ENCODE measurements at regions of chr1 and their contacts with region 1.

Region 1: DNA sequence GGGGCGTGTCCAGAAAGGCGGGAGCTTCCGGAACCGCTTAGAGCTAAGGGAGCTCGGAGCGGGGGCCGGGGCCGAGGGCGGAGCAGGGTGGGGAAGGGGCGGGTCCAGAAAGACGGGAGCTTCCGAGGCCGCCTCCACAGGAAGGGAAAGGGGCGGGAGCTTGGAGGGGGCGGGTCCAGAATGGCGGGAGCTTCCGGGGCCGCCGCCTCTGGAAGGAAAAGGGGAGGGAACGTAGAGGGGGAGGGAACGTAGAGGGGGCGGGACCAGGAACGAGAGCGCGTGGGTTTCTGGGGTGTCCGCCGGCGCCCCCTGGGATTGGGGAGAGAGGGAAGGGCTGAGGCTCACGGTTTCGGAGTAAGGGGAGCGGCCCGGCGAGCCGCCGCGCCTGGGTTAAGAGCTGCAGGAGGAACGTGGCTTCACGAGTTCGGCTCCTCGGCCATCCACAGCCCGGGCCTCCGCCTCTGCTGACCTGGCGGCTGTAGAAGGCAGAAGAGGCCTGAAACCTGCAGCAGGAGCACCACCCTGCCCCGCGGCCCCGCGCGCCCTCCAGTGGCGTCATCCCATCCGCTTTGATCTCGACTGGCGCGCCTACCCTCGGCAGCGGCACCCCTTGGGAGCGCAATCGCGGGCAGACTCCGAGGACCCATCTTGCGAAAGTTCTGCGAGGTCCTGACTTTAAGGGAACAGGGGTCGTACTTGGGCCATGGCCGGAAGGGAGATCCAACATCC is 22.9 kb upstream of the HPDL start:
- DNase-seq: peak; percentile 84
- ATAC-seq: peak; percentile 86
- H3K4me3 ChIP-seq: peak overlapping the region; percentile 90
- H3K27ac ChIP-seq: peak overlapping the region; percentile 95
- H3K4me1 ChIP-seq: peaks cover 18% of the 10 kb centered on the region
- H3K27me3 ChIP-seq: no peaks in the 10 kb centered on the region
- CTCF ChIP-seq: peak; percentile 65 to 75 (median 68)
- EP300 ChIP-seq: no peak
- POLR2A ChIP-seq: peak; percentile 95
- RAD21 ChIP-seq: peak; percentile 51

Region 2: DNA sequence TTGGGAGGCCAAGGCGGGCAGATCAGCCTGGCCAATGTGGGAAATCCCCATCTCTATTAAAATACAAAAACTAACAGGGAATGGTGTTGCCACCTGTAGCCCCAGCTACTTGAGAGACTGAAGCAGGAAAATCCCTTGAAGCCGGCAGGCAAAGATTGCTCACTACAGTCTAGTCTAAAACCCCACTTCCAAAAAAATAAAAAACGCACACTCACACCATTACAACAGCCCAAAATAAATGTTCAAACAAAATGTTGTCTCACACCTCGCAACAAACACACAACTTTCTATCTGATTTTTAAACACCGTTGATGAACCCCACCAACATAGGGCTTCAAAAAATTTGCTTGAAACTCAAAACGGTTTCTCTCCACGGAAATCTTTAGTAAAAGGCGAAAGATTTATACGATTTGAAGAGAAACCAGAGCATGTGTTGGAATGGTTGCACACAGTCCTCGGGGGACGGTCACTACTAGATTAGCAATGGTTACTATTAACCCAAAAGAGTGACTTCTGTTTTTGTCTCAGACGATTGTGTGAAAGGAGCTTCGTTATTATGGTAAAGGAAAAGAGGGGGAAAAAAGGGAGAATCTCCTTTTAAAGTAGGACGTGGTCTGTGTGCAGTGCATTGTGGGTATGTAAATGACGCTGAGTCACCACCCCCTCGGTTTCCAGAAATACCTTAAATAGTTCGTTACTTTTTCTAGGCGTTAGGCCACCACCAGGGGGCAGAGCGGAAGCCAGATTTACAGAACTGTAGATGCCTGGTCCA is 572.8 kb before region 1 on chr1 and contains the start of gene RNU5D-1:
- CTCF ChIA-PET with region 1: interaction called, 10 read pairs
- POLR2A ChIA-PET with region 1: interaction called, 4 read pairs
- RAD21 ChIA-PET with region 1: interaction called, 9 read pairs
- SMC1A ChIA-PET with region 1: interaction called, 6 read pairs
- in situ Hi-C with region 1: no loop called
- intact Hi-C with region 1: loop called (anchors 5 kb)
- DNase-seq: peak; percentile 98
- ATAC-seq: peak; percentile 87
- H3K4me3 ChIP-seq: peak within 1 kb of the TSS; percentile 47; the same call in 1 of the 2 replicates
- H3K27ac ChIP-seq: peak within 1 kb of the TSS; percentile 100
- H3K4me1 ChIP-seq: peaks cover 14% of the 10 kb centered on the region
- H3K27me3 ChIP-seq: no peaks in the 10 kb centered on the region
- CTCF ChIP-seq: peak; percentile 72 to 88 (median 83)
- EP300 ChIP-seq: peak in 1 of 2 experiments; percentile 44; a peak in 1 of 4 replicates
- POLR2A ChIP-seq: peak; percentile 96
- RAD21 ChIP-seq: peak; percentile 58
- polyA plus RNA-seq, gene RNU5D-1: not detected

Region 3: GRCh38 chr1:44826375-44827196 is 477.2 kb before region 1 on chr1:
- CTCF ChIA-PET with region 1: interaction called, 3 read pairs
- POLR2A ChIA-PET with region 1: interaction called, 5 read pairs
- RAD21 ChIA-PET with region 1: interaction called, 4 read pairs
- SMC1A ChIA-PET with region 1: interaction called, 3 read pairs
- in situ Hi-C with region 1: loop called (anchors 5 kb)
- intact Hi-C with region 1: no loop called
- DNase-seq: no peak
- ATAC-seq: peak; percentile 19; the same call in 2 of the 3 replicates
- H3K4me3 ChIP-seq: no peak overlapping the region
- H3K27ac ChIP-seq: no peak overlapping the region
- H3K4me1 ChIP-seq: no peaks in the 10 kb centered on the region
- H3K27me3 ChIP-seq: no peaks in the 10 kb centered on the region; a peak in 1 of 4 replicates
- CTCF ChIP-seq: no peak
- EP300 ChIP-seq: no peak
- POLR2A ChIP-seq: no peak
- RAD21 ChIP-seq: no peak

Region 4: DNA sequence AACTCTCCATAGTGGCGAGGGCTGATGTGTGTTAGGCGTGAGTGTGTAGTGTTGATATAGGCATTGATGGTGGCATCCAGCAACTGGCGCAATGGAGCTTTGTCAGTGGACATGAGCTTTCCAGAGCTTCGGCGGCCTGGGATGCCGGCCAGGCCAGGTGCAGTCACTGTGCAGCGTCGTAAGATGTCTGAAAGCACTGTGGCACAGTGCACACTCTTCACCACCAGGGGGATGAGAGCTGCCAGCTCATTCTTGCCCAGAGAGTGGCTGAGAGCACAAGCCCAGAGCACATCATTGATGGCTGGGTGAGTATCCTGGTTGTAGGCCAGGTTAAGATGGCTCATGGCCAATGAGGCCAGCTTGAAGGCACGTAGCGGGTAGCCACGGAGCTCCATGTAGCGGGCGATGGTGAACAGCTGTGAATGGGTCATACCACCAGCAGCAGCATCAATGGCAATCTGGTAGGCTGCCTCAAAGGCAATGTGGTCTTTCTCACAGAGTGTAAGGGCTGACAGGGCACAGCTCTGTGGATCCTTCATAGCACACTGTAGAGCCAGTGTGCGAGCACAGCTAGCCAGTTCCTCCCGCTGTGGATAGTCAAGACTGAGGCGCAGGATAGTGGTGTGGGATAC is 285.0 kb before region 1 on chr1:
- CTCF ChIA-PET with region 1: interaction called, 252 read pairs
- POLR2A ChIA-PET with region 1: interaction called, 12 read pairs
- RAD21 ChIA-PET with region 1: interaction called, 313 read pairs
- SMC1A ChIA-PET with region 1: interaction called, 284 read pairs
- in situ Hi-C with region 1: loop called (anchors 5 kb)
- intact Hi-C with region 1: loop called (anchors 1 kb)
- DNase-seq: no peak
- ATAC-seq: peak; percentile 93
- H3K4me3 ChIP-seq: no peak overlapping the region
- H3K27ac ChIP-seq: no peak overlapping the region
- H3K4me1 ChIP-seq: no peaks in the 10 kb centered on the region
- H3K27me3 ChIP-seq: no peaks in the 10 kb centered on the region
- CTCF ChIP-seq: peak; percentile 71 to 87 (median 84)
- EP300 ChIP-seq: no peak
- POLR2A ChIP-seq: no peak
- RAD21 ChIP-seq: peak; percentile 87

Region 5: GRCh38 chr1:45339789-45340570 is 36.2 kb after region 1 on chr1 and contains the starts of genes MUTYH and TOE1:
- CTCF ChIA-PET with region 1: interaction called, 32 read pairs
- POLR2A ChIA-PET with region 1: interaction called, 98 read pairs
- RAD21 ChIA-PET with region 1: interaction called, 67 read pairs
- SMC1A ChIA-PET with region 1: interaction called, 73 read pairs
- in situ Hi-C with region 1: no loop called
- intact Hi-C with region 1: loop called (anchors 1 kb)
- DNase-seq: peak; percentile 73
- ATAC-seq: peak; percentile 92
- H3K4me3 ChIP-seq: peak within 1 kb of the TSS; percentile 71
- H3K27ac ChIP-seq: peak within 1 kb of the TSS; percentile 93
- H3K4me1 ChIP-seq: peaks cover 11% of the 10 kb centered on the region
- H3K27me3 ChIP-seq: no peaks in the 10 kb centered on the region
- CTCF ChIP-seq: no peak
- EP300 ChIP-seq: no peak
- POLR2A ChIP-seq: peak; percentile 97
- RAD21 ChIP-seq: no peak
- polyA plus RNA-seq, gene MUTYH: 2.5 to 10.5 TPM
- polyA plus RNA-seq, gene TOE1: 33.5 to 38.0 TPM

Region 6: GRCh38 chr1:45499415-45499769 is 195.6 kb after region 1 on chr1:
- CTCF ChIA-PET with region 1: interaction called, 153 read pairs
- POLR2A ChIA-PET with region 1: interaction called, 5 read pairs
- RAD21 ChIA-PET with region 1: interaction called, 146 read pairs
- SMC1A ChIA-PET with region 1: interaction called, 4 read pairs
- in situ Hi-C with region 1: no loop called
- intact Hi-C with region 1: no loop called
- DNase-seq: no peak
- ATAC-seq: no peak; the same call in 2 of the 3 replicates
- H3K4me3 ChIP-seq: peak overlapping the region; percentile 93
- H3K27ac ChIP-seq: peak overlapping the region; percentile 54
- H3K4me1 ChIP-seq: peaks cover 15% of the 10 kb centered on the region
- H3K27me3 ChIP-seq: no peaks in the 10 kb centered on the region
- CTCF ChIP-seq: no peak
- EP300 ChIP-seq: no peak
- POLR2A ChIP-seq: no peak
- RAD21 ChIP-seq: no peak

Measured in GM12878 (cell line).